ENCODE measurements at regions of chr1 and their contacts with region 1.

Region 1: DNA sequence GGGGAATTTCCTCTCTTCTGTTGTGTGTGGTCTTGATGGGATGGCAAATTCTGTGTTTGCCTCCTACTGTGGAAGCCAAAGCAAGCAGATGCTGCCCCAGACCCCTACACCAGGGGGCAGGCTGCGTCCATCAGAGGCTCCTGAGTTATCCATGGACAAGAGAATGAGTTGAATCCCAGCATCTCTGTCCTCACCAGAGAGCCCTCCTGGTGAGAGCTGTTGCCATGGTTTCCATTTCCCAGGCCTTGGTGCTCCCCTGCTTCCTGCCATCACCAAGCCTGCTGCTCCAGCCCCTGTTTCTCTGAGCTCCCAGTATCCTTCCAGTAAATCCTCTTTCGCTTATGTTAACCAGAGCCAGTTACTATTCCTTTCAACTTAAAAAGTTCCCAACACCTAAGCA is 20.4 kb upstream of the GNG12 start:
- DNase-seq: peak; percentile 76
- ATAC-seq: peak; percentile 72

Region 2: GRCh38 chr1:68010090-68010489 is 156.4 kb after region 1 on chr1:
- intact Hi-C with region 1: loop called (anchors 10 kb)
- DNase-seq: no peak
- ATAC-seq: peak; percentile 72

Region 3: DNA sequence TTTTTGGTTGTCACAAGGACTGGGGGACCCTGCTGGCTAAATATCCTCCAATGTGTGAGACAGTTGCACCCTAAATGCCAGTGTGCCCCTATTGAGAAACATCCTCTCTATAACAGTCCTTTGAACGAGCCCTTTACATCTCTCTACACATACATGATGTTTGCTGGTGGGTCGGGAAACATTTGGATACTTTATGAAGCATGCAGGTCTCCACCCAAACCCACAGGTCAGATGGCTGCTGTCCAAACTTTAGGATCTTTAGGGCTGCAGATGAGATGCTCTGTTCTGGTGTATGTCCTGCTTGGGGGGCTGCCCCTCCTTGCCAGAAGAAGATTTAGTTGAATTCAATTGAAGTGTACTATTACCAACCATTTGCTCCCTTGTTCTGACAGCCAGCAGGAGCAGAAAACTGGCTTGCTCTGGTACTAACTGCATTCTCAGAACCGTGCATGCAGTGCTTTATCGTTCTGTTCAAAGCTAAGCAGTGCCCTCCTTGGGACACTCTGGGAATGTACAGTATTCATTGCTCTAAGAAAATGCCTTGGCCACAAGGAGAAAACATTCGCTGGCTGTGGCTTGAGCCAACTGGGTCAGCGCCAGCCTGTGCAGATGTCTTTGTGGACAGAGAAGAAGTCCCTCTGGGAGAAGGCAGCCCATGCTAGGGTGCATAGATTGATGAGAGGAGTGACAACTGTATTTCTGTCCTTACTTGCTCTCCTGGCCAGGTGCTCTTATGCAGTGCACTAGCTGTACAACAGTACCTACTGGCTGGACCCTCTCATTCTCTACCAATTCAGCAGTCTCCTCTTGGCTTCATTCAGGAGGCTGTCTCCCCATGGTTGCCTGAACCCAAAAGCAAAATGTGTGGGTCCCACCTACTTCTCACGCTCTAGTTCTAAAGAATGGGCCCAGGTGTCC is 258.1 kb after region 1 on chr1:
- intact Hi-C with region 1: loop called (anchors 5 kb)
- DNase-seq: peak; percentile 82
- ATAC-seq: peak; percentile 86

Region 4: GRCh38 chr1:68128157-68128556 is 274.5 kb after region 1 on chr1:
- intact Hi-C with region 1: no loop called
- DNase-seq: no peak
- ATAC-seq: peak; percentile 53

Region 5: GRCh38 chr1:68346188-68346808 is 492.6 kb after region 1 on chr1:
- intact Hi-C with region 1: loop called (anchors 5 kb)
- DNase-seq: no peak
- ATAC-seq: no peak